ENCODE measurements at regions of chr10 and their contacts with region 1.

Region 1: DNA sequence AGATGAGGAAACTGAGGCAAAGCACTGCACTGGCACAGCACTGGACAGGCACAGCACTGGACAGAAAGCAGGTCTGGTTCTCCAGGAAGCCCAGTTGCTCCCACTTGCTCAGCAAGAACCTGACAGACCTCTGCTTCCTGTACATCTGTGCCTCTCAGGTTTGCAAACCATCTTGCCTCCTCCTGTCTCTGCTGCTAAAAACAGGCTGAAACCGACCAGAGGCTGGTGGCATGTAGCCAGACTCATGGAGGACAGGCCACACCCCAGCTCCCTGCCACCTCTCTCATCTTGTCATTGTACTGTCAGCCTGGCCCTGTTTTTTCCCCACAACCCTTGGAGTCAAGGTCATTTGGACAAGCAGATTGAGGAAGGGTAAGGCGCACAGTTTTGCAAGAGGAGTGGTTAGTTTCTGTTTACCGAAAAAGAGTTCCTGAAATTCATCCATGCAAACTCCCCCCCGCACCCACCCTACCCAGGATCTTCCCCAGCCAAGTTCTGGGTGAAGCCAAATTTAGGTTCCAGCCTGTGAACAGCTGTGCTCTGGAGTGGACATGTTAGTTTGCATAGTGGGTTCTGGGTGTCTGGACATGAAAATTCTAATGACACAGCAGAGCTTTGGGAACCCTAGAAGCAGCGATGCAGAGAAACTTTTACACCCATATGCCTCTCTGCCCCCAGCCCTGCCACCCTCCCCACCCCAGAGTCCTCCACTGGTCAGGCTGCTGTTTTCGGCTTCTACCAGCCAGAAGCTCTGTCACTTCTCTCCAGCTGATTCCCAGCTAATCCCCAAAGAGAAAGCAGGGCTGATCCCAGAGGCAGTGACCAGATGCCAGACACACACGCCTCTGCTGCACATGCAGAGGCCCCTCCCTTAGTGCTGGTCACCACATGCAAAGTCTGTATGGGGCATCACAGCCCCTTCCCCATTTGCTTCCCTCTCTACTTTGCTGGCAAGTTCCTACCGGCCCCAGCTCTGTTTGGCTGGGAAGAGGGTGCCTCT is 8.5 kb upstream of the C10orf105 start:
- DNase-seq: peak; percentile 87
- H3K4me3 Mint-ChIP-seq: peak overlapping the region; percentile 58
- H3K27ac Mint-ChIP-seq: peak overlapping the region; percentile 99
- H3K4me1 Mint-ChIP-seq: peaks cover 95% of the 10 kb centered on the region
- H3K27me3 Mint-ChIP-seq: no peaks in the 10 kb centered on the region

Region 2: DNA sequence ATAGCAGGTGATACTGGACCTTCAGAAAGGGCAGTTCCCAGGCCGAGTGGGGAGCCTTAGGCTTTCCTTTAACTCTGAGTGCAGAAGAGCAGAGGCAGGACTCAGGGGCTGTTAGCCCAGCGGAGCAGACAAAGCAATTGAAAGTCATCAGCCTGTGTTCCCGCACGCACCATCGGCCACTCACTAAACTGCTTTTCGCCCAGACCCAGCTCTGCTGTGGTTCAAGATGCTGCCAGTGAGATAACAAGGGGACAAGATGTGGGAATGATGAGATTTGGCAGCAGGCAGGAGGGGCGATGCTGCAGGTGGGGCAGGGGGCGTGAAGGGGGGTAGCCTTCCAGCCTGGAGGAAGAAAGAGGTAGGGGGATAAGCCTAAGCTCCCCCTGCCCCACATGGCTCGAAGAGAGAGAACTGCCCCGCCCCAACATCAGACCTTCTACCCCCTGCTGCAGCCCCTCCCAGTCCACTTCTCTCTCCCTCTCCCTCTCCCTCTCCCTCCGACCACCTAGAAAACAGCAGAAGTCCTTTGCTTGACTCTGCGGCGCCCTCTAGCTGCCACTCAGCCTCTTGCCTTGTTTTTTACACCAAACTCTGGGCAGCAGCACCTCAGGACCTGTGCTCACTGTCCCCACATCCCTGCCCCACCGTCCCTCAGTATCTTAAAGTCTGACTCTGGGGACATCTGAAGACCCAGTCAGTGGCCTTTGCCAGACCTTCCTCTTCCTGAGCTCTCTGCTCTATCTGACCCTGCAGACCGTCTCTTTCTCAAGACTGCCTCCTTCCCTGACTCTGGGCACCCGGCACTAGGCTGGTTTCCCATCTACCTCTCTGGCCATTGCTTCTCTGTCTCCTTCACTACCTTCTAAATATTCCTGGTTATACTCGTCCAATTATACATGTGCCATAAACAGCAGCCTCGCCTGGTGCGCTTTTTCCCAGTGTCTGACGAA is 118.9 kb before region 1 on chr10:
- CTCF ChIA-PET with region 1: no interaction called
- POLR2A ChIA-PET with region 1: no interaction called
- intact Hi-C with region 1: no loop called
- DNase-seq: peak; percentile 78
- H3K4me3 Mint-ChIP-seq: no peak overlapping the region
- H3K27ac Mint-ChIP-seq: no peak overlapping the region
- H3K4me1 Mint-ChIP-seq: no peaks in the 10 kb centered on the region
- H3K27me3 Mint-ChIP-seq: peaks cover 1% of the 10 kb centered on the region

Region 3: DNA sequence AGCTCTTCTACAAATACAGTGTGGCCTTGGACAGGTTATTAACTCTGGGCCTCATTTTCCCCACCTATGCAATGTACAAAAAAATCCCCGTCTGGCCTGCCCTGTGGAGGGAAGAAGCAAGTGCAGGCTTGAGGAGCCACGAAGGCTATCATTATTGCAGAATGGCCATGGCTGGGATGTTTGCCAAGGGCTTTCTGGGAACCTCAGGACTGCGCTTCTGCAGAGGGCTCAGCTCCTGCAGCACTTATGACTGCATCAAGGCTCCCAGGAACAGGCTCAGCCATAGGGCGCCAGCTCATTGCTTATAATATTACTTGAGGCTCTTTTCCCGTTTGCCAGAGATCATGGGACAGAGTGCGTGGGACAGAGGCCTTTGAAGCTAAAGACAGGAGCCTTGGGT is 12.0 kb after region 1 on chr10:
- CTCF ChIA-PET with region 1: interaction called, 30 read pairs
- POLR2A ChIA-PET with region 1: interaction called, 36 read pairs
- intact Hi-C with region 1: loop called (anchors 1 kb)
- DNase-seq: no peak
- H3K4me3 Mint-ChIP-seq: no peak overlapping the region
- H3K27ac Mint-ChIP-seq: peak overlapping the region; percentile 98
- H3K4me1 Mint-ChIP-seq: peaks cover 99% of the 10 kb centered on the region
- H3K27me3 Mint-ChIP-seq: no peaks in the 10 kb centered on the region

Region 4: GRCh38 chr10:71756311-71757191 is 28.5 kb after region 1 on chr10:
- CTCF ChIA-PET with region 1: interaction called, 22 read pairs
- POLR2A ChIA-PET with region 1: interaction called, 14 read pairs
- intact Hi-C with region 1: no loop called
- DNase-seq: no peak
- H3K4me3 Mint-ChIP-seq: peak overlapping the region; percentile 63
- H3K27ac Mint-ChIP-seq: peak overlapping the region; percentile 95
- H3K4me1 Mint-ChIP-seq: peaks cover 94% of the 10 kb centered on the region
- H3K27me3 Mint-ChIP-seq: no peaks in the 10 kb centered on the region

Region 5: DNA sequence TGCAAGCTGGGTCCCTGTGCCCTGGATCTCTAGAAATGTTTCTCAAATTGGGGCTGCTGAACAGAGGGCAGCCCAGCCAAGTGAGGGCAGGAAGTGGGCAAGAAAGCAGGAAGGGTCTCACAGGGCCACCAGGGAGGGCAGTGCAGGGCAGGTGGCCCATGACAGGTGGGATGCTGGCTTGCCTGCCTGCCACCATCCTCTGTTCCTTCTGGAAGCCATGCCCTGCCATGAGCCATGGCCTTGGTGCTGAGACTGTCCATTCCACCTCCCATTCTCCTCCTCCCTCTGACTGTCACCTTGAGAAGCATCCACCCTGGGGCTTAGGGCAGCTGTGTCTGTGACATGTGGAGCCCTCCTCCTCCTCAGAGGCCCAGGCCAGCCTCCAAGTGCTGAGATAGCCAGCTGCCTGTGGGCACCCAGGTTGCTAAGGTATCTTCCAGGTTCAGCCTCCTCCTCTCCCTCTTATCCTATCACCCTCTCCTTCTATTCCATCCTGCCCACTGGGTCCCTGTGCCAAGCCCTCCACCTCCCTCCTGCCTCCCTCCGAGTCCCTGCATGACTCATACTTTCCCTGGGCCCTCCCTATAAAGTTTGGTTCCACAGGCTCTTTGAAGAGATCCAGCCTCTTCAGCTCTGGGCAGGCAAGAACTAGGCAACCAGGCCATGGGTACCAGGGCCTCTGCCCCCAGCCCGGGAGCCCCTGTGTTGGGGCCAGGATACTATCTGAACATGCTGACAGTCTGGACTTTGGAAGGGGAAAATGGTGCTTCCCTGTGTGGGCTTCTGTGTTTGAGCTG is 44.0 kb after region 1 on chr10:
- CTCF ChIA-PET with region 1: interaction called, 118 read pairs
- POLR2A ChIA-PET with region 1: interaction called, 51 read pairs
- intact Hi-C with region 1: loop called (anchors 1 kb)
- DNase-seq: peak; percentile 72
- H3K4me3 Mint-ChIP-seq: peak overlapping the region; percentile 92
- H3K27ac Mint-ChIP-seq: peak overlapping the region; percentile 99
- H3K4me1 Mint-ChIP-seq: peaks cover 80% of the 10 kb centered on the region
- H3K27me3 Mint-ChIP-seq: no peaks in the 10 kb centered on the region

Region 6: GRCh38 chr10:72088889-72089575 is 361.0 kb after region 1 on chr10:
- CTCF ChIA-PET with region 1: no interaction called
- POLR2A ChIA-PET with region 1: no interaction called
- intact Hi-C with region 1: loop called (anchors 2 kb)
- DNase-seq: peak; percentile 76
- H3K4me3 Mint-ChIP-seq: peak overlapping the region; percentile 100
- H3K27ac Mint-ChIP-seq: peak overlapping the region; percentile 99
- H3K4me1 Mint-ChIP-seq: peaks cover 46% of the 10 kb centered on the region
- H3K27me3 Mint-ChIP-seq: no peaks in the 10 kb centered on the region

Measured in activated CD4-positive, alpha-beta memory T cell treated with anti-CD3 and anti-CD28 coated beads for 36 hours (primary cell).